Caco-2 (cell line): ENCODE measurements at regions of chr17 and their contacts with region 1.

Region 1: GRCh38 chr17:56779898-56780733 is 53.6 kb downstream of the C17orf67 start:
- DNase-seq: peak; percentile 75 to 90
- H3K4me3 ChIP-seq: peak overlapping the region; percentile 4; the same call in 1 of the 2 replicates
- H3K4me3 Mint-ChIP-seq: peak overlapping the region; percentile 54
- H3K27ac Mint-ChIP-seq: no peak overlapping the region
- H3K4me1 ChIP-seq: peaks cover 5% of the 10 kb centered on the region; the same call in 1 of the 2 replicates
- H3K4me1 Mint-ChIP-seq: peaks cover 6% of the 10 kb centered on the region
- H3K27me3 ChIP-seq: peaks cover 2% of the 10 kb centered on the region
- H3K27me3 Mint-ChIP-seq: peaks cover 34% of the 10 kb centered on the region
- CTCF ChIP-seq: peak; percentile 90 to 98

Region 2: GRCh38 chr17:56913864-56914640 is 133.9 kb after region 1 on chr17 and contains the start of gene TRIM25:
- CTCF ChIA-PET with region 1: no interaction called
- POLR2A ChIA-PET with region 1: no interaction called
- intact Hi-C with region 1: loop called (anchors 1 kb)
- DNase-seq: peak; percentile 86 to 95
- H3K4me3 ChIP-seq: peak within 1 kb of the TSS; percentile 90
- H3K4me3 Mint-ChIP-seq: peak within 1 kb of the TSS; percentile 98
- H3K27ac Mint-ChIP-seq: peak within 1 kb of the TSS; percentile 94
- H3K4me1 ChIP-seq: peaks cover 25% of the 10 kb centered on the region
- H3K4me1 Mint-ChIP-seq: peaks cover 30% of the 10 kb centered on the region
- H3K27me3 ChIP-seq: no peaks in the 10 kb centered on the region
- H3K27me3 Mint-ChIP-seq: no peaks in the 10 kb centered on the region
- CTCF ChIP-seq: no peak
- total RNA-seq, gene TRIM25: 85.6 and 89.4 TPM in 2 replicates